ENCODE measurements at regions of chr2 and their contacts with region 1.

Region 1: DNA sequence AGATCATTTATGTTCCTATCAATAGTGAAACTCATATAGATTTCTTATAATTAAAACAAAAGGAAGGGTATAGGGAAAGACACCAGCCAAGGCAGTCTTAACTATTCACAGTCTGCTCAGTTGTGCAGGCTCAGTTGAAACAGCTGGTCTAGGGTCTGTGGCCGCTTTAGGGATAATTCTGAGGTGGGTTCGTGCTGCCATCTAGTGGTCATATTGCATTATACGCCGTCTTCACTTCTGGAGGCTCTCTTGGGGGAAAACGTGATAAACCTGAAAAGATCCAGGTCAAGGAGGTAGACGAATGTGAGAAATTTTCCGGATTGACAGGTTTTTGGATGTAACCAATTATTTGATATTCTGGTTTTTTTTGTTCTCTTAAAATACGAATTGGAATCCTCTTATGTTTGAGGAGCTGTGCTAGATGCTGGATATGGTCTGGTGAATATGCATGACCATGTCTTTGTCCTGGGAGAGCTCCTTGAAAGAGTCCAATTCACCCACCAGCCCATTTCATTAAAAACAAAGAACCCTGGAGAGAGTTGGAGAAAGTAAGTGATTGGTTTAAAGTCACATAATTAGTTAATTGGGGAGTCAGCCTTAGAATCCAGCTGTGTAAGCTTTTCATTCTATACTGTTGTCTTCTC is 492.4 kb downstream of the PLCL1 start:
- DNase-seq: peak; percentile 78
- H3K4me3 ChIP-seq: no peak overlapping the region
- H3K27ac ChIP-seq: no peak overlapping the region
- H3K4me1 ChIP-seq: no peaks in the 10 kb centered on the region
- H3K27me3 ChIP-seq: no peaks in the 10 kb centered on the region
- CTCF ChIP-seq: peak; percentile 68 to 88 (median 69)
- POLR2A ChIP-seq: no peak

Region 2: GRCh38 chr2:197799068-197799467 is 497.7 kb before region 1 on chr2:
- intact Hi-C with region 1: loop called (anchors 2 kb)
- DNase-seq: no peak
- H3K4me3 ChIP-seq: no peak overlapping the region
- H3K27ac ChIP-seq: no peak overlapping the region
- H3K4me1 ChIP-seq: no peaks in the 10 kb centered on the region
- H3K27me3 ChIP-seq: no peaks in the 10 kb centered on the region
- CTCF ChIP-seq: no peak
- POLR2A ChIP-seq: no peak

Measured in testis (tissue), 5 donors.